OCI-LY7 (cell line): ENCODE measurements at regions of chr12 and their contacts with region 1.

Region 1: DNA sequence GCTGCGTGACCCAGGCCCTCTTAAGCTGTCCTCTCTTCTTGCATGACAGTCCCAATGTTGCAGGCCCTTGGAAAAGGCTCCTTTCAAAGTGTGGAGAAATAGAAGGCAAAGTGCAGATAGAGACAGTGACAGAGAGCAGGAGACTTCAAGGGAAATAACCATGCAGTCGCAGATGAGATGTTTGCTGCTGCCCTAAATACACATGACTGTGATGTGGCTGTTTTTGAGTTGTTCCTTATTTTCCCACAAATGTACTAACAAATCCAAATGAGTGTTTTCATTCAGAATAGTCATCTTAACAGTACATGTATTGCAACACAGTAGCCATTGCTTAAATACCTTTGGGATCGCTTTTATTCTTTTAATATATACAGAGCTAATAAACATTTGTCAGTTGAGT is 101.6 kb downstream of the SLC15A5 start:
- DNase-seq: no peak
- H3K4me3 ChIP-seq: no peak overlapping the region
- H3K27ac ChIP-seq: no peak overlapping the region
- H3K4me1 ChIP-seq: no peaks in the 10 kb centered on the region
- CTCF ChIP-seq: no peak

Region 2: GRCh38 chr12:14868920-14869506 is 1306.8 kb before region 1 on chr12:
- CTCF ChIA-PET with region 1: no interaction called
- POLR2A ChIA-PET with region 1: no interaction called
- intact Hi-C with region 1: no loop called
- DNase-seq: no peak
- H3K4me3 ChIP-seq: no peak overlapping the region
- H3K27ac ChIP-seq: no peak overlapping the region
- H3K4me1 ChIP-seq: peaks cover 10% of the 10 kb centered on the region
- CTCF ChIP-seq: no peak

Region 3: GRCh38 chr12:16158050-16158449 is 17.8 kb before region 1 on chr12:
- CTCF ChIA-PET with region 1: no interaction called
- POLR2A ChIA-PET with region 1: no interaction called
- intact Hi-C with region 1: no loop called
- DNase-seq: no peak
- H3K4me3 ChIP-seq: no peak overlapping the region
- H3K27ac ChIP-seq: no peak overlapping the region
- H3K4me1 ChIP-seq: no peaks in the 10 kb centered on the region
- CTCF ChIP-seq: no peak

Region 4: GRCh38 chr12:16513231-16513630 is 337.4 kb after region 1 on chr12:
- CTCF ChIA-PET with region 1: no interaction called
- POLR2A ChIA-PET with region 1: no interaction called
- intact Hi-C with region 1: no loop called
- DNase-seq: no peak
- H3K4me3 ChIP-seq: no peak overlapping the region
- H3K27ac ChIP-seq: no peak overlapping the region
- H3K4me1 ChIP-seq: no peaks in the 10 kb centered on the region
- CTCF ChIP-seq: no peak

Region 5: GRCh38 chr12:16857456-16857923 is 681.6 kb after region 1 on chr12:
- CTCF ChIA-PET with region 1: no interaction called
- POLR2A ChIA-PET with region 1: no interaction called
- intact Hi-C with region 1: loop called (anchors 10 kb)
- DNase-seq: peak; percentile 83
- H3K4me3 ChIP-seq: peak overlapping the region; percentile 37
- H3K27ac ChIP-seq: peak overlapping the region; percentile 62
- H3K4me1 ChIP-seq: peaks cover 29% of the 10 kb centered on the region
- CTCF ChIP-seq: no peak